Tibial artery (tissue), 4 donors: ENCODE measurements at regions of chr16 and their contacts with region 1.

Region 1: GRCh38 chr16:72989579-72990551 is 58.1 kb downstream of the ZFHX3 start:
- DNase-seq: peak; percentile 94 to 96
- H3K4me3 ChIP-seq: peak overlapping the region in 1 of 2 donors; percentile 41
- H3K27ac ChIP-seq: peak overlapping the region; percentile 82 to 89
- H3K4me1 ChIP-seq: peaks cover 4 to 99% (median 86%) of the 10 kb centered on the region in 4 donors
- H3K27me3 ChIP-seq: no peaks in the 10 kb centered on the region
- CTCF ChIP-seq: no peak

Region 2: DNA sequence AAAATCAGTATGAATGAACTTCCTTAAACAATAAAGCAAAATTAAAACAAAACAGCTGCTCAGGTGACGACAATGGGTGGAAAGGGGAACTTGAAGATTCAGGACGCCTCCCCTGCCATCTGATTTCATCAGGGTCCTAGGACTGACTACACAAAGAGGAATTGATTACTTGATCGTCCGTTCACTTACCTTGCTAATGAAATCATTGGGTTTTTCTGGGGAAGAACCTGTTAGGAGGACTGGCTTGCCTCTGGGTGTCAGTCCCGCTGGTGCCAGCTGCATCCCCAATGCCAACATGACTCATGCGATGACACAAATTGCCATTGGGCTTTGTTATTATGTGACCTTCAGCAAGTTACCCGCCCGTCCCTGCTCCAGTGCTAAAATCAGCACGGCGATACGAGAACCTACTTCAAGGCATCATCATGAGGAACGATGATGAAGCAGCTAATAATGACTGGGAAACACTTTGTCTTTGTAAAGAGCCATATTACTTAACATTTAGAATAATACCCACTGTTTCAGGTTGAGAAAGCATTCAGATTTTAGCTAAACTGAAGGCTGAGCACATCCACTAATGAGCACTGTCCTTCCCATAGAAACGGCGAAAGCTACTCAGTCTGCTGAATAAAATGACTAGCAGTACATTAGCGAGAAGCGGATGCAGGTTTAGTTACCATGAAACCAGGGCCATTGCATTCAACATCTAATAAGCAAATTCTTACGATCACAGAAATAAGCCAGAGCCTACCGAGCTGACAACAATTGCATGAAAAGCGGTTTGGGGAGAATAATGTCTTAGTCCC is 81.3 kb before region 1 on chr16:
- intact Hi-C with region 1: no loop called
- DNase-seq: peak in 1 of 2 donors; percentile 57
- H3K4me3 ChIP-seq: no peak overlapping the region
- H3K27ac ChIP-seq: no peak overlapping the region
- H3K4me1 ChIP-seq: peaks cover 0 to 60% (median 16%) of the 10 kb centered on the region in 4 donors
- H3K27me3 ChIP-seq: no peaks in the 10 kb centered on the region
- CTCF ChIP-seq: no peak

Region 3: GRCh38 chr16:72947379-72948237 is 42.3 kb before region 1 on chr16:
- intact Hi-C with region 1: loop called (anchors 5 kb)
- DNase-seq: peak in 1 of 2 donors; percentile 80
- H3K4me3 ChIP-seq: peak overlapping the region; percentile 3 to 13
- H3K27ac ChIP-seq: peak overlapping the region; percentile 84 to 87
- H3K4me1 ChIP-seq: peaks cover 0 to 97% (median 34%) of the 10 kb centered on the region in 4 donors
- H3K27me3 ChIP-seq: no peaks in the 10 kb centered on the region
- CTCF ChIP-seq: no peak

Region 4: GRCh38 chr16:73047518-73048291 is 57.8 kb after region 1 on chr16 and contains the start of gene ZFHX3:
- intact Hi-C with region 1: loop called (anchors 10 kb)
- DNase-seq: peak; percentile 84 to 89
- H3K4me3 ChIP-seq: peak within 1 kb of the TSS; percentile 78 to 94
- H3K27ac ChIP-seq: peak within 1 kb of the TSS; percentile 99
- H3K4me1 ChIP-seq: peaks cover 0 to 87% (median 63%) of the 10 kb centered on the region in 4 donors
- H3K27me3 ChIP-seq: no peaks in the 10 kb centered on the region
- CTCF ChIP-seq: no peak